ENCODE measurements at regions of chr16 and their contacts with region 1.

Region 1: DNA sequence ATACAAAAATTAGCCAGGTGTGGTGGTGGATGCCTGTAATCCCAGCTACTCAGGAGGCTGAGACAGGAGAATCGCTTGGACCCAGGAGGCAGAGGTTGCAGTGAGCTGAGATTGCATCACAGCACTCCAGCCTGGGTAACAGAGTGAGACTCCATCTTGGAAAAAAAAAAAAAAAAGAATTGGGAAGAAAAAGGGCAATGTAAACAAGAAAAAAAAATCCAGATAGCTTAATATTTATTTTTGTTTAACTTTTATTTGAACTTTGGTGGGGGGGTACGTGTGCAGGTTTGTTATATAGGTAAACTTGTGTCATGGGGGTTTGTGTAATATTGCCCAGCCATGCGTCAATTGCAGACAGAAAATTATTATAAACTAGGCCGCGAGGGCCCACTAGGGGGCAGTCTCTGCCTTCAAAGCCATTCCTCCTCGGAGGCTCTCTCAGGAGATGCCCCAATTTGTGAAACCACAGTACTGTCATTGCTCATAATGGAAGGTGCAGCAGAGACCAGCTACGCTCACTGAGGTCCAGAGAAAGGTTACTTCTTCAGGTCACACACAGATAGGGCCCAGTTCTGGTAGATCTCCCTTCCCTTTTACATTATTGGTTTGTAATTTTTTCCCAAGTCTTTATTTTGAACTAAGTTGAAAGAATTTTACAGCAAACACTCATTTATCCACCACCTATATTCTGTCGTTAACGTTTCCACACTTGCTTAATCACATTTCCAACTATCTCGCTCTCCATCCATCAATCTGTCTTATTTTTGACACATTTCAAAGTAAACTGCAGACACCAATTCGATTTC is 206.2 kb downstream of the PRKCB start:
- DNase-seq: peak; percentile 68
- H3K4me3 ChIP-seq: no peak overlapping the region
- H3K27ac ChIP-seq: no peak overlapping the region
- H3K4me1 ChIP-seq: no peaks in the 10 kb centered on the region
- H3K27me3 ChIP-seq: no peaks in the 10 kb centered on the region
- CTCF ChIP-seq: peak; percentile 64

Region 2: DNA sequence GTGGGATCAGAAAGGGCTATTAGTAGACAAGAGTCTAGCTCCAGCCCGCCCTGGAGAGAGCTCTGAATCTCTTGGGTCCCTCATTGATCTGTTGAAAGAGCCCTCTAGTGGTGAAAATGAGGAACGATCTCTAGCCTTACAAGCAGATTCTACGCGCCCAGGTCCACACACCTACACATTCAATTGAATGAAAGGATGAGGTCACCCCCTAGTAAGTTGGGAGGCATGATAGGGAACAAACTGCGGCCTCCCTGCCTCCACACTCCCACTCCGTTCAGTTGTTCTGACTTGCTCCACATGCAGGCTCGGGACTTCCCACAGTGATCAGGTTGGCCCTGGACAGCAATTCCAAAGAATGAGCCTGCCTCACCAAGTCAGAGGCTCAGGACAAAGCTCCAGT is 211.2 kb after region 1 on chr16:
- intact Hi-C with region 1: loop called (anchors 5 kb)
- DNase-seq: no peak
- H3K4me3 ChIP-seq: no peak overlapping the region
- H3K27ac ChIP-seq: no peak overlapping the region
- H3K4me1 ChIP-seq: no peaks in the 10 kb centered on the region
- H3K27me3 ChIP-seq: no peaks in the 10 kb centered on the region
- CTCF ChIP-seq: peak; percentile 52

Region 3: GRCh38 chr16:24504472-24505345 is 462.7 kb after region 1 on chr16:
- intact Hi-C with region 1: loop called (anchors 2 kb)
- DNase-seq: peak; percentile 47
- H3K4me3 ChIP-seq: no peak overlapping the region
- H3K27ac ChIP-seq: no peak overlapping the region
- H3K4me1 ChIP-seq: no peaks in the 10 kb centered on the region
- H3K27me3 ChIP-seq: no peaks in the 10 kb centered on the region
- CTCF ChIP-seq: peak; percentile 68

Measured in colonic mucosa (tissue), 4 donors.